HepG2 (cell line): ENCODE measurements at regions of chr4 and their contacts with region 1.

Region 1: GRCh38 chr4:40309250-40309774 is 25.8 kb upstream of the CHRNA9 start:
- DNase-seq: peak; percentile 64
- ATAC-seq: peak; percentile 98
- H3K4me3 ChIP-seq: peak overlapping the region in 1 of 3 experiments; percentile 51; a peak in 3 of 6 replicates
- H3K27ac ChIP-seq: no peak overlapping the region
- H3K4me1 ChIP-seq: peaks cover 5% of the 10 kb centered on the region; the same call in 1 of the 2 replicates
- H3K27me3 ChIP-seq: 0 out of 5 replicates have a peak, but pooled peaks cover 0 to 1% of the 10 kb centered on the region in 2 experiments
- CTCF ChIP-seq: peak; percentile 96
- EP300 ChIP-seq: no peak
- POLR2A ChIP-seq: no peak
- RAD21 ChIP-seq: peak; percentile 84

Region 2: GRCh38 chr4:40149960-40150385 is 159.3 kb before region 1 on chr4:
- CTCF ChIA-PET with region 1: interaction called, 29 read pairs
- POLR2A ChIA-PET with region 1: no interaction called
- in situ Hi-C with region 1: loop called (anchors 5 kb)
- intact Hi-C with region 1: loop called (anchors 1 kb)
- DNase-seq: peak; percentile 65
- ATAC-seq: peak; percentile 78
- H3K4me3 ChIP-seq: no peak overlapping the region
- H3K27ac ChIP-seq: no peak overlapping the region
- H3K4me1 ChIP-seq: no peaks in the 10 kb centered on the region
- H3K27me3 ChIP-seq: no peaks in the 10 kb centered on the region
- CTCF ChIP-seq: peak; percentile 83
- EP300 ChIP-seq: no peak
- POLR2A ChIP-seq: no peak
- RAD21 ChIP-seq: peak; percentile 77

Region 3: DNA sequence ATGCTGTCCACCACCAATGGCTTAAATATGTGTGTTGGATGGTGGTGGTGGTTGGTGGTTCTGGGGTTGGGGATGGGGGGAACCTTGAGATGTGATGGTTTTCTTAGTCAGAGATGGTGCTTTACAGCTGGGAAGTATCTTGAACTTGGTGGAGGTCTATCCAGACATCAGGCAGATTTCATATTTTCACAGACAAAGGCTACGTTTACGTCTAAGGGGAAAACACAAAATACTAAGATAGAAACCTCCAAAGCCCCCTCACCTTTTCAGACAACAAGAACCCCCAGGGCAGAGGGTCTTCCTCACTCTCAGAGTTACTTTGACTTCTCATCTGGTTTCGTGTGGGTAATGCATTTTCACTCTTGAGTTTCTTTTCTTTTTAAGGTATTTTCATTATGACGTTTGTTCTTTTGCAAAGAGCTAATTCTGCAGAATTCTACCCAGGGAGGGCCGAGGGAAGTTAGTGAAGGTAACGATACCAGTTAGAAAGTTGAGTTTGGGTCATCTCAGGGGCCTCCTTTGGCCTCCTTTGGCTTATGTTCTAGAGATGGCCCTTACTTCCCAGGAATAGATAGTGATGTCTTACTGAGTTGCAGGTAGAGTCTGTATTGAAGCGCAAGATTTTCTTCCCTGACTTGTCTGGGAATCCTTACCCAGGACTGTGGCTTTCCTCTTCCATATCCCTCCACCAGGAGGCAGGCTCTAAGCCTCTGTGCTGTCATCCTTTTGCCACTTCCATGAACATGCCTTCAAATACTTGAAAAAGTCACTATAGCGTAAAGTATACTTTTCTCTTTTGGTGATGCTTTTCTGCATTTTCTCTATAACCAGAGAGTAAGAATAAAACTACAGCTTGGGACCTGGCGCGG is 80.6 kb before region 1 on chr4:
- CTCF ChIA-PET with region 1: interaction called, 5 read pairs
- POLR2A ChIA-PET with region 1: no interaction called
- in situ Hi-C with region 1: no loop called
- intact Hi-C with region 1: loop called (anchors 1 kb)
- DNase-seq: no peak
- ATAC-seq: peak; percentile 71
- H3K4me3 ChIP-seq: no peak overlapping the region
- H3K27ac ChIP-seq: no peak overlapping the region
- H3K4me1 ChIP-seq: peaks cover 12% of the 10 kb centered on the region
- H3K27me3 ChIP-seq: no peaks in the 10 kb centered on the region
- CTCF ChIP-seq: peak; percentile 39; the same call in 1 of the 2 replicates
- EP300 ChIP-seq: no peak
- POLR2A ChIP-seq: no peak
- RAD21 ChIP-seq: no peak